ENCODE measurements at regions of chr6 and their contacts with region 1.

Region 1: DNA sequence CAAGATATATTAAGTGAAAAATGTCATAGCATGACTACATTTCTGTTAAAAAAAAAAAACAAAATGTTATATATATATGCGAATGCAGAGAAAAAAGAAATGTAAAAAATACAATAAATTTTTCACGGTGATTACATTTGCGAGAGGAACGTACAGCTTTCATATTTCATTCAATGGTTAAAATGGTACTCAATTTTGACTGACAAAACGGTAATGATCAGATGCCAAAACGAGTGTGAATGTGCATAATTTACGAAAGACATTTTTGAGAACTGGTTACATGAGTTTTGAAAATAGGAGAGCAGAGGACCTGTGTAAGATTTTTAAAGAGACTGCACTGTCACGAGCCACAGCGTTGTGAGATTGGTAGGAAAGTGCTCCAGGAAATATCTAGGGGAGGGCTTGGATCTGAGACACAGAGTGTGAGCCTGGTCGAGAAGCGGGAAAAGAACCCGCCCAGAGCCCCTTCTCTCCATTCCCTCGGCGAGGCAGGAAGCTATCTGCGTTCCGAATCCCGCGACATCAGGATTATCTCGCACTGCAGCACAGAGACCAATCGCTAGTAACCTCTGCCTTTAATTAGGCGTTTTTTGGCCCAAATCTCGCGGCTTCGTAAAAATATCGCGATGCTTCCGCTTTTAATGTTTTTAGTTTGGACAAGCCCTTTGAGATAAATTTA is 28.5 kb downstream of the TRIM27 start:
- DNase-seq: peak; percentile 79 to 99 (median 88)
- ATAC-seq: peak; percentile 84
- H3K4me3 ChIP-seq: peak overlapping the region; percentile 49
- H3K27ac ChIP-seq: peak overlapping the region; percentile 98
- H3K4me1 ChIP-seq: peaks cover 14 to 15% of the 10 kb centered on the region in 2 experiments; a peak in 4 of 5 replicates
- H3K27me3 ChIP-seq: no peaks in the 10 kb centered on the region
- CTCF ChIP-seq: no peak
- EP300 ChIP-seq: no peak
- POLR2A ChIP-seq: peak; percentile 96
- RAD21 ChIP-seq: no peak

Region 2: GRCh38 chr6:28863604-28864320 is 31.5 kb before region 1 on chr6:
- CTCF ChIA-PET with region 1: no interaction called
- POLR2A ChIA-PET with region 1: interaction called, 10 read pairs
- in situ Hi-C with region 1: no loop called
- intact Hi-C with region 1: loop called (anchors 1 kb)
- DNase-seq: peak; percentile 64 to 92 (median 68)
- ATAC-seq: peak; percentile 72
- H3K4me3 ChIP-seq: peak overlapping the region; percentile 64
- H3K27ac ChIP-seq: peak overlapping the region; percentile 79
- H3K4me1 ChIP-seq: peaks cover 14 to 25% of the 10 kb centered on the region in 2 experiments; a peak in 4 of 5 replicates
- H3K27me3 ChIP-seq: no peaks in the 10 kb centered on the region
- CTCF ChIP-seq: 0 out of 6 replicates have a peak, but pooled peaks of 1 of the 3 experiments have one; percentile 61
- EP300 ChIP-seq: peak; percentile 76
- POLR2A ChIP-seq: peak; percentile 54; the same call in 1 of the 2 replicates
- RAD21 ChIP-seq: peak in 1 of 2 experiments; percentile 63; a peak in 3 of 4 replicates

Region 3: DNA sequence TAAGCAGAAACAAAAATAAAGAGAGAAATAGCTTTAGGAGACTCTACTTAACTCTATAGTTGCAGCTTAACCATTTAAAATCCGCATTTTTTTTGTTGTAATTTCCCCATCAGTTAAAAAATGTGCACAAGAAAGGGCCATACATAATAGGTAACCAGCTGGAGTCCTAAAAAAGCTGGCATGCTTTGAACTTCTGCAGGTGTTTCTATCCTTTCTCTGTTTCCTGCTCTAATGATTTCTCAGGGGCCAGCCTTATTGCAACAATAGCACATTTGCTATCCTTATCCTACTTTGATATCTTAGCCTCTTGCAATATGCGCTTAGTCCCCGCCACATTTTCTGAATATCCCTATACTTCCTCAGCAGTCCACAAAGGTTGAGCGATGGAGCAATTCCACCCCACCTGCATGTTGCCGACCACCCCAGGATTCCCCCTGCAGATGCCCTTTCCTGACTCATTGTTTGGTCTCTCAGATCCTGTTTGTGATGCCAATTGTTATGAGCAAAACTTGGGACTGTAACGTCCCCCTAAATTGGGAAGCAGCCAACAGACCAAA is 20.0 kb before region 1 on chr6:
- CTCF ChIA-PET with region 1: no interaction called
- POLR2A ChIA-PET with region 1: interaction called, 19 read pairs
- in situ Hi-C with region 1: no loop called
- intact Hi-C with region 1: no loop called
- DNase-seq: no peak
- ATAC-seq: 0 out of 3 replicates have a peak, but pooled peaks have one; percentile 8
- H3K4me3 ChIP-seq: no peak overlapping the region
- H3K27ac ChIP-seq: 0 out of 3 replicates have a peak overlapping the region, but pooled peaks have one; percentile 61
- H3K4me1 ChIP-seq: peaks cover 6 to 13% of the 10 kb centered on the region in 2 experiments; a peak in 3 of 5 replicates
- H3K27me3 ChIP-seq: no peaks in the 10 kb centered on the region
- CTCF ChIP-seq: no peak
- EP300 ChIP-seq: no peak
- POLR2A ChIP-seq: no peak
- RAD21 ChIP-seq: no peak

Region 4: GRCh38 chr6:28880894-28881780 is 14.1 kb before region 1 on chr6:
- CTCF ChIA-PET with region 1: no interaction called
- POLR2A ChIA-PET with region 1: interaction called, 19 read pairs
- in situ Hi-C with region 1: no loop called
- intact Hi-C with region 1: no loop called
- DNase-seq: peak; percentile 72 to 93 (median 74)
- ATAC-seq: peak; percentile 67
- H3K4me3 ChIP-seq: peak overlapping the region; percentile 63
- H3K27ac ChIP-seq: peak overlapping the region; percentile 66
- H3K4me1 ChIP-seq: peaks cover 3% of the 10 kb centered on the region in 2 experiments; a peak in 2 of 5 replicates
- H3K27me3 ChIP-seq: no peaks in the 10 kb centered on the region
- CTCF ChIP-seq: peak in 1 of 3 experiments; percentile 4; a peak in 1 of 6 replicates
- EP300 ChIP-seq: peak; percentile 78
- POLR2A ChIP-seq: no peak
- RAD21 ChIP-seq: no peak

Region 5: DNA sequence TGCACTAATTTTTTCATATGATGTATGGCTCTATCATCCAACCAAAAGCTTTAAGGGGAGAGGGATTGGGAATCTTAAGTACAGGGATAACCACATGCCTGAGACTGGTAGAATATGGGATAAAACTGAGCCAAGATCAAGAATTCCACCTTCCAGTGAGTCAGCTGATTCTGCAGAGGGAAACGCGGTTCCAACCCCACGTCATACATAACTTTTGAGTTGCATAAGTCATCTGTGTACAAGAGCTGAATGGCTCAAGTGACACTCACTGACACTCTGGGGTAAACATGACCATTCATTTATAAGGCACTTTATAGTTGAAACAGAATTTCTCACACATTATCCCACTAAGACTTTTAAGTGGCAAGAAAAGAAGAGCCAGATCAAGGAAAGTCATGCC is 12.1 kb after region 1 on chr6:
- CTCF ChIA-PET with region 1: no interaction called
- POLR2A ChIA-PET with region 1: interaction called, 23 read pairs
- in situ Hi-C with region 1: no loop called
- intact Hi-C with region 1: no loop called
- DNase-seq: no peak
- ATAC-seq: no peak
- H3K4me3 ChIP-seq: no peak overlapping the region
- H3K27ac ChIP-seq: no peak overlapping the region
- H3K4me1 ChIP-seq: no peaks in the 10 kb centered on the region; a peak in 2 of 5 replicates
- H3K27me3 ChIP-seq: no peaks in the 10 kb centered on the region
- CTCF ChIP-seq: no peak
- EP300 ChIP-seq: no peak
- POLR2A ChIP-seq: no peak
- RAD21 ChIP-seq: no peak

Region 6: DNA sequence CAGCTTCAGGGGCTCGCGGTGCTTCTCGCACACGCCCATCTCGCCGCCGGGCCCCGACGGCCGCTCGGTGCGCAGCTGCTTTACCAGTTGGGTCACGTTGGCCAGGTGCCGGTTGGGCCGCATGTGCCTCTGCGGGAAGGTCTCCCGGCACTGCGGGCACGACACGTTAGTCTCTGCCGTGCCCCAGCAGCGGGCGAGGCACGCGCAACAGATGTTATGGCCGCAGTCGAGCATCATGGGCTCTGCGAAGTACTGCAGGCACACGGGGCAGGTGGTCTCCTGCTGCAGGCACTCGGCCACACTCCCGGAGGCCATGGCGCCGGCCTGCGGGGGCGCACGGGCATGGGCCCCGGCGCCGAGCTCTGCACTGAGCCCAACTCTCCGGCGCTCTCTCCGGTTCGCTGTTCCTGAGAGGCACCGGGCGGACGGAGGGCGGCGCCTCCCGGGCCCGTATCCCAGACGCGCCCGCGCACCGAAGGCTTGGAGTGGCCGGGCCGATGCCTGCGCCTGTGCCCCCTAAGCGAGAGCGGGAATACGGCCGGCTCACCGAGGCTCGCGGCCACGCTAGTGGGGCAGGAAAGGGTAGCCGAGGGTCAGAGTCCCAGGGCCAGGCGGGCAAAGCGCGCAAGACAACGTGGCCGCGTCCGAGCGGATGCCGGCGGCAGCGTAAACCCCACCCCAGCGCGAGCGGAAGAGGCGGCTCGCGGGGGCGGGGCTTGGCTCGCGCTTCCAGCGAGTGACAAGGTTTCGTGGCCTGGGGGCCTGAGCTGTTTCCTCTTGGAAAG is 28.2 kb after region 1 on chr6 and contains the start of gene TRIM27:
- CTCF ChIA-PET with region 1: no interaction called
- POLR2A ChIA-PET with region 1: interaction called, 14 read pairs
- in situ Hi-C with region 1: no loop called
- intact Hi-C with region 1: loop called (anchors 2 kb)
- DNase-seq: peak; percentile 91 to 97 (median 92)
- ATAC-seq: peak; percentile 91
- H3K4me3 ChIP-seq: peak within 1 kb of the TSS; percentile 95
- H3K27ac ChIP-seq: peak within 1 kb of the TSS; percentile 97
- H3K4me1 ChIP-seq: peaks cover 26 to 32% of the 10 kb centered on the region in 2 experiments
- H3K27me3 ChIP-seq: no peaks in the 10 kb centered on the region
- CTCF ChIP-seq: no peak
- EP300 ChIP-seq: no peak
- POLR2A ChIP-seq: peak; percentile 98
- RAD21 ChIP-seq: no peak
- polyA plus RNA-seq, gene TRIM27: 37.7 to 49.6 TPM

Region 7: DNA sequence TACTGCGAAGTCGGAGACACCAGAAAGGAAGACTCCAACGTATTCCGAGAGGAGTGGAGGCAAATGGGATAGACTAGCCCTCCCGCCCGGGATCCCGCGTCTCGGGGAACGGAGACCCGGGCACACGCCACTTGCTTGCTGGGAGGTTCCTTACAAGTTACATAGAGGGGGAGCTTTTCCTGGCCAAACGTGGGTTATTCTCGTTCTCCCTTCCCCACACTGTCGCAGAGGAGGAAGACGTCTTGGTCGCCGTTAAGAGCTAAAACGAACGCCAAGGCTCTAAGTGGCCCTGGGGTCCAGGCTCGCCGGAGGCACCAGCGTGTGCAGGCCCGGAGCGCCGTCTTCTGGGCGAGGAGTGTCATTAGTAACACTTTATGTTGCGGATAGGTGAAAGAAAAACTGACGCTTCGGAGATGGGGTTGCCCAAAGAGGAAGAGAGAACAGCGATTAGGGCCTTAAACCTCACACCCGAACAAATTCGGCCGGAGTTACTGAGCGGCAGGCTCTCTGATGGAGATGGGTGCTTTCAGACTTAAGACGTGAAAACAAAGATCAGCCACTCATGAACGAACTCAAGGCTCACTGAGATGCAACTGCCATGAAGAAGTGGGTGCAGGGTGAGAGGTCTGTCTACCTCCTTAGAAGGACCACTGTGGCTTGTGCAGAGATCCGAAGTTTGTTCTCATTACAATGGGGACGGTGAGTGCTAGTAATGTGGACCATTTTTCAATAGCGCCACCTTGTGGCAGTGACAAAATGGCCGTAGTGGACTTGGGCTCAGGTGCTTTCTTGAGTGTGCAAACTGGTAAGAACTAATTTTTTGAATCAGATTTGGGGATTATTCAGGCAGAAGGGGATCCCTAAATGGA is 121.5 kb after region 1 on chr6:
- CTCF ChIA-PET with region 1: interaction called, 3 read pairs
- POLR2A ChIA-PET with region 1: no interaction called
- in situ Hi-C with region 1: no loop called
- intact Hi-C with region 1: loop called (anchors 1 kb)
- DNase-seq: peak; percentile 73 to 96 (median 78)
- ATAC-seq: peak; percentile 96
- H3K4me3 ChIP-seq: peak overlapping the region; percentile 56
- H3K27ac ChIP-seq: peak overlapping the region; percentile 69
- H3K4me1 ChIP-seq: peaks cover 3 to 7% of the 10 kb centered on the region in 2 experiments; a peak in 3 of 5 replicates
- H3K27me3 ChIP-seq: no peaks in the 10 kb centered on the region
- CTCF ChIP-seq: peak; percentile 90 to 93 (median 93)
- EP300 ChIP-seq: no peak
- POLR2A ChIP-seq: no peak
- RAD21 ChIP-seq: peak; percentile 88 to 93

Region 8: DNA sequence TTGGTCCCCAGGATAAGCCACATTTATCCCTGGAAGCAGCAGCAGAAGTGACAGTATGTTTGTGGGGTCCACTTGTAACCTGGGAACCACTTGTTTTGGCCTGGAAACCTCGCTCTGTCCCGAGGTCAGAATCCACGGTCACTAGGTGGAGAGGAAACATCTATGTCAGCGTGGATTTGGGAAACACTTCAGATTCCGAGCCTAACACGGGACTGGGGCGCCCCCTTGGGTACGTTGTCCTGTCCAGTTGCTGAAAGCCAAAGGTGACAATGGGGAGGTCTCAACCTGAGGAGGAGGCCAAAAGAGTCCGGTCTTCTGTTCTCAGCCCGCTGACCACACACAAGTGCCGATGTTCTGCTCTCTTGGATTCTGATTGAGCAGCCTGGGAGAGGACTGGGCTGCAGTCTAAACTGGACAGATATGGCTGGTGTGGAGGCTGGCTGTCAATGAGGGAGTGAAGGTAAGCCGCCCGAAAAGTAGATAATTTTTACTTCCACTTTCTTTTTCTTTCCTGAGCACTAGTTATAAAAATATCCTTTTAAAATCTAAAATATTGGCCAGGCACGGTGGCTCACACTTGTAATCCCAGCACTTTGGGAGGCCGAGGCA is 790.5 kb after region 1 on chr6:
- CTCF ChIA-PET with region 1: no interaction called
- POLR2A ChIA-PET with region 1: no interaction called
- in situ Hi-C with region 1: no loop called
- intact Hi-C with region 1: no loop called
- DNase-seq: peak in 3 of 4 experiments; percentile 32 to 54 (median 42)
- ATAC-seq: peak; percentile 86
- H3K4me3 ChIP-seq: no peak overlapping the region
- H3K27ac ChIP-seq: no peak overlapping the region
- H3K4me1 ChIP-seq: peaks cover 0 to 2% of the 10 kb centered on the region in 2 experiments; a peak in 2 of 5 replicates
- H3K27me3 ChIP-seq: peaks cover 8 to 28% of the 10 kb centered on the region in 2 experiments; a peak in 4 of 5 replicates
- CTCF ChIP-seq: peak; percentile 62 to 67 (median 63)
- EP300 ChIP-seq: no peak
- POLR2A ChIP-seq: no peak
- RAD21 ChIP-seq: peak in 1 of 2 experiments; percentile 63; a peak in 2 of 4 replicates

Measured in K562 (cell line).